Brain microvascular endothelial cell (primary cell): ENCODE measurements at regions of chr1 and their contacts with region 1.

Region 1: GRCh38 chr1:67535474-67535873 is 105.3 kb upstream of the SERBP1 start:
- DNase-seq: peak; percentile 83
- H3K4me3 ChIP-seq: no peak overlapping the region
- H3K27ac ChIP-seq: no peak overlapping the region
- H3K27me3 ChIP-seq: no peaks in the 10 kb centered on the region
- CTCF ChIP-seq: peak; percentile 98

Region 2: GRCh38 chr1:67685067-67685557 is 149.6 kb after region 1 on chr1 and contains the start of gene GADD45A:
- in situ Hi-C with region 1: loop called (anchors 25 kb)
- DNase-seq: peak; percentile 99
- H3K4me3 ChIP-seq: peak within 1 kb of the TSS; percentile 94
- H3K27ac ChIP-seq: peak within 1 kb of the TSS; percentile 92
- H3K27me3 ChIP-seq: no peaks in the 10 kb centered on the region
- CTCF ChIP-seq: no peak

Region 3: GRCh38 chr1:67760030-67760821 is 224.8 kb after region 1 on chr1:
- in situ Hi-C with region 1: loop called (anchors 25 kb)
- DNase-seq: peak; percentile 85
- H3K4me3 ChIP-seq: no peak overlapping the region
- H3K27ac ChIP-seq: peak overlapping the region; percentile 77
- H3K27me3 ChIP-seq: no peaks in the 10 kb centered on the region
- CTCF ChIP-seq: peak; percentile 85